ENCODE measurements at regions of chr13 and their contacts with region 1.

Region 1: GRCh38 chr13:94620286-94620896 is 18.7 kb downstream of the GPR180 start:
- DNase-seq: peak; percentile 54
- H3K4me3 Mint-ChIP-seq: no peak overlapping the region
- H3K27ac Mint-ChIP-seq: no peak overlapping the region
- H3K4me1 Mint-ChIP-seq: peaks cover 9% of the 10 kb centered on the region
- H3K27me3 Mint-ChIP-seq: no peaks in the 10 kb centered on the region

Region 2: GRCh38 chr13:94400874-94401273 is 219.5 kb before region 1 on chr13:
- CTCF ChIA-PET with region 1: no interaction called
- DNase-seq: no peak
- H3K4me3 Mint-ChIP-seq: no peak overlapping the region
- H3K27ac Mint-ChIP-seq: no peak overlapping the region
- H3K4me1 Mint-ChIP-seq: no peaks in the 10 kb centered on the region
- H3K27me3 Mint-ChIP-seq: no peaks in the 10 kb centered on the region

Region 3: DNA sequence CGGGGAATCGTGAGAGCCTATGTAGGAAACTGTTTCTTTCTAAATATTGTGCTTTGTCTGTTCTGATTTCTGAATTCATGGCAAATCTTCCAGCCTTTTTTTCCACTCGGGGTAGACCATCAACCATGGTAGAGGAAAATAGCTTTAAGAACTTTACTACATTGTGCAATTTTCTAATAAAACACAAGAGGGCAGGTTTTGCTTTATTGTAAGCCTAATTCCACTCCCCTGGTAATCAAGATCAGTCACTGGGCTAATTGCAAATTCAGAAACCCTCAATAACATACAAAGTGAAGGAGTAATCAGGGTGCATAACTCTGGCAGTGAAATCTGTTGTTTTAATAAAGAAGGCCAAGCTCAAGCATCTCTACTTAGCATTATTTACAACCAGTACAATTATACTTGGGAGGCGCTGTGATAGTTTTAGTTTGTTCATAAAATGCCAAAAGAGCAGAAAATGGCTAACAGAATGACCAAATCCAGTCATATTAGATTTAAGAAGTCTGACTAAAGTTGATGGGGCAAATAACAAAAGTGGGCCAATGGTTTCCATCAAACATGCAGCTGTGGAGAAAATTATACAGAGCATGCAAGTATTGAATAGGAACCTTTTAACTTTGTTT is 184.7 kb before region 1 on chr13:
- CTCF ChIA-PET with region 1: interaction called, 203 read pairs
- DNase-seq: no peak
- H3K4me3 Mint-ChIP-seq: no peak overlapping the region
- H3K27ac Mint-ChIP-seq: no peak overlapping the region
- H3K4me1 Mint-ChIP-seq: peaks cover 10% of the 10 kb centered on the region
- H3K27me3 Mint-ChIP-seq: no peaks in the 10 kb centered on the region

Region 4: DNA sequence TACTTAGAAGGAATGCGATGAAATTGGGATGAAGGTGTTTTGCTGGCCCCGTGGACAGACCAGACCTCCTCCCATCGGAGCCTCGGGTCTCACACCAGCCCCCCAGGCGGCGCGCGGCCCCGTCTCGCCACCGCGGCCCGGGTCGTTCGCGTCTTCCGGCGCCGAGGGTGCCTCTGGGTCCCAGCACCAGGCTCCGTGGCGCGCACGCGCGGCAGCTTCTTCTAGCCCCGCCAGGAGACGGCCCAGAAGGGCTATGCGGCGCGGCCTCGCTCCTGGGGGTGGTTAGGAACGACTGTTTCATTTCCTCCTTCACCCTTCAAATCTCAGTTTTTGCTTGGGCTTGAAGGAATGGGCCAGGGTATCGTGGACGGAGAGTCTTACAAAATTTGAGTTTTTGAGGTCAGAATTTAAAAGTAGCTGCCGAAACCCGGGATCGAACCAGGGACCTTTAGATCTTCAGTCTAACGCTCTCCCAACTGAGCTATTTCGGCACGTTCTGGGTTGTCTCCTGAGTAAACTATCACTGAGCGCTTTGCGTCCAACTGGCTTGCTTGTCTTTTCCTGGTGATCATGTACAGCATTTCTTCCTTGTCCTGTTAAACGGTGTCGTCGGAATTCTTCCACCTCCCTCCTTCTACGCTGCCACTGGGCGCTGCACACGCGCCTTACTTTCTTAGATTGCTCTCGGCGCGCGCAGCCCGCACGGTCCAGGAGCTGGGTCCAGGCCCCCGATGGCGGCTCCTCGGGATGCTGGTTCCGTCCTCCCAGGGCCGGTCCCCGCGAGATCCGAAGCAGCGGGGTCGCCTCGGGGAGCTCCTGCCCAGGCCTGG is 70.9 kb before region 1 on chr13:
- CTCF ChIA-PET with region 1: interaction called, 10 read pairs
- DNase-seq: peak; percentile 92
- H3K4me3 Mint-ChIP-seq: peak overlapping the region; percentile 83
- H3K27ac Mint-ChIP-seq: peak overlapping the region; percentile 96
- H3K4me1 Mint-ChIP-seq: peaks cover 17% of the 10 kb centered on the region
- H3K27me3 Mint-ChIP-seq: peaks cover 18% of the 10 kb centered on the region